Activated T-helper 1 cell treated with anti-CD3 and anti-CD28 coated beads, Interleukin-12 subunit alpha, Interleukin-12 subunit beta, Interleukin-2, Interleukin-4 antibody, amounts not matched to agents 30 ng/mL and 10 ng/mL and 1 ng/mL, durations not matched to agents 14 hours and 24 hours and 36 hours (primary cell): ENCODE measurements at regions of chr12 and their contacts with region 1.

Region 1: GRCh38 chr12:68290126-68290525 is 36.7 kb upstream of the IL22 start:
- DNase-seq: peak; percentile 45
- H3K4me3 Mint-ChIP-seq: peak overlapping the region; percentile 15
- H3K27ac Mint-ChIP-seq: peak overlapping the region; percentile 59
- H3K4me1 Mint-ChIP-seq: peaks cover 75% of the 10 kb centered on the region
- H3K27me3 Mint-ChIP-seq: peaks cover 3% of the 10 kb centered on the region

Region 2: GRCh38 chr12:67457778-67458177 is 832.3 kb before region 1 on chr12:
- intact Hi-C with region 1: loop called (anchors 10 kb)
- DNase-seq: no peak
- H3K4me3 Mint-ChIP-seq: no peak overlapping the region
- H3K27ac Mint-ChIP-seq: no peak overlapping the region
- H3K4me1 Mint-ChIP-seq: peaks cover 6% of the 10 kb centered on the region
- H3K27me3 Mint-ChIP-seq: peaks cover 27% of the 10 kb centered on the region

Region 3: GRCh38 chr12:67827820-67828383 is 462.2 kb before region 1 on chr12:
- intact Hi-C with region 1: loop called (anchors 10 kb)
- DNase-seq: no peak
- H3K4me3 Mint-ChIP-seq: peak overlapping the region; percentile 3
- H3K27ac Mint-ChIP-seq: peak overlapping the region; percentile 67
- H3K4me1 Mint-ChIP-seq: peaks cover 14% of the 10 kb centered on the region
- H3K27me3 Mint-ChIP-seq: no peaks in the 10 kb centered on the region

Region 4: GRCh38 chr12:68236421-68237059 is 53.6 kb before region 1 on chr12:
- intact Hi-C with region 1: loop called (anchors 1 kb)
- DNase-seq: peak; percentile 39
- H3K4me3 Mint-ChIP-seq: peak overlapping the region; percentile 84
- H3K27ac Mint-ChIP-seq: peak overlapping the region; percentile 93
- H3K4me1 Mint-ChIP-seq: peaks cover 94% of the 10 kb centered on the region
- H3K27me3 Mint-ChIP-seq: no peaks in the 10 kb centered on the region

Region 5: DNA sequence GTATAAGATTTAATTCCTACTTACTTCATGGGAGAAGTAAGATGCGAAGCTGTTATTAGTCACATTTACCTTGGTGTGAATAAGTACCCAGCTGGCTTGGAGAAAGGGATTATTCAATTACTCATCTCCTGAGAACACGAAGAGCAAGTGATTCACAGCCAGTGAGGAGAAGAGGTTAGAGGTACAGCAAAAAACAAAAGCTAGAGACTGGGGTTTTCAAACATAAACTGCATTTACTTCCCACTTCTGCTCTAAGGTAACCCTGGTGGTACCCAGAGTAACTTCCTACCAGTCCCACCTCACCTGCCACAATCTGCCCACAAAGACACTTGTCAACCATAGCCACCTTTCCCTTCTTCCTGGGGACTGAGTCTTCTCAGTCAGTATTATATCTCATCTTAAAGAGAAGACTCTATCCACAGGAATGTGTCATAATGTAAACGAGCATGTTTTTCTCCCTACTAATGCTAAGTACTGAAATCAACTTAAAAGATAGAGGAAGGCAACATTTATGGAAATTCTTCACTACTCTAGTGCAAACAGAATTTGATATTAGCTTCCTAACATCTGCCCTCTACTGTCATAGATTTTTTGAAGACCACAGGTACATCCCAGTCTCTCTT is 30.7 kb before region 1 on chr12:
- intact Hi-C with region 1: loop called (anchors 1 kb)
- DNase-seq: peak; percentile 31
- H3K4me3 Mint-ChIP-seq: peak overlapping the region; percentile 12
- H3K27ac Mint-ChIP-seq: peak overlapping the region; percentile 69
- H3K4me1 Mint-ChIP-seq: peaks cover 68% of the 10 kb centered on the region
- H3K27me3 Mint-ChIP-seq: peaks cover 19% of the 10 kb centered on the region

Region 6: GRCh38 chr12:68303850-68304249 is 13.7 kb after region 1 on chr12:
- intact Hi-C with region 1: loop called (anchors 1 kb)
- DNase-seq: no peak
- H3K4me3 Mint-ChIP-seq: no peak overlapping the region
- H3K27ac Mint-ChIP-seq: no peak overlapping the region
- H3K4me1 Mint-ChIP-seq: peaks cover 59% of the 10 kb centered on the region
- H3K27me3 Mint-ChIP-seq: no peaks in the 10 kb centered on the region